Activated CD4-positive, alpha-beta T cell treated with anti-CD3 and anti-CD28 coated beads for 36 hours (primary cell): ENCODE measurements at regions of chr5 and their contacts with region 1.

Region 1: GRCh38 chr5:14720236-14720971 is 55.9 kb downstream of the OTULIN start:
- DNase-seq: peak; percentile 1
- ATAC-seq: no peak
- H3K4me3 Mint-ChIP-seq: no peak overlapping the region
- H3K27ac Mint-ChIP-seq: no peak overlapping the region
- H3K4me1 Mint-ChIP-seq: peaks cover 33% of the 10 kb centered on the region
- H3K27me3 Mint-ChIP-seq: no peaks in the 10 kb centered on the region

Region 2: DNA sequence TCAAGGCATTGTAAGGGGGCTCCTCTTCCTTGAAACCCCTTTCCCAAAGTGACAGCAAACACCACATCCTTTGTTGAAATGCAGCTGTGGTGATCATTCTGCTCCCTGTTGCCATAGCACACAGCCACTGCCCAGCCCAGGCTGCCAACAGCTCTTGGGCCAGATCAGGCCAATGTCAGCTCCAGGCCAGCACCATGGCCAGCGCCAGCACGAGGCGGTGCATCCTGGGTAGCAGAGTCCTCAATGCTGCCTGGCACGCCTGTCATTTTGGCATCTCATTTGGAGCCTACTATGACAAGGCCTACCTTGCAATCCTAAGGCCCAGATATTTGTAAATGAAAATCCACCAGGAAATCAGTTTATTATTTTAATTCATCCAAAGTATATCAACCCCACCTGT is 1166.5 kb before region 1 on chr5:
- CTCF ChIA-PET with region 1: no interaction called
- POLR2A ChIA-PET with region 1: no interaction called
- intact Hi-C with region 1: no loop called
- DNase-seq: peak; percentile 6
- ATAC-seq: no peak
- H3K4me3 Mint-ChIP-seq: no peak overlapping the region
- H3K27ac Mint-ChIP-seq: no peak overlapping the region
- H3K4me1 Mint-ChIP-seq: no peaks in the 10 kb centered on the region
- H3K27me3 Mint-ChIP-seq: no peaks in the 10 kb centered on the region

Region 3: GRCh38 chr5:14696057-14696456 is 24.3 kb before region 1 on chr5:
- CTCF ChIA-PET with region 1: no interaction called
- POLR2A ChIA-PET with region 1: no interaction called
- intact Hi-C with region 1: no loop called
- DNase-seq: no peak
- ATAC-seq: no peak
- H3K4me3 Mint-ChIP-seq: no peak overlapping the region
- H3K27ac Mint-ChIP-seq: peak overlapping the region; percentile 11
- H3K4me1 Mint-ChIP-seq: peaks cover 26% of the 10 kb centered on the region
- H3K27me3 Mint-ChIP-seq: no peaks in the 10 kb centered on the region

Region 4: DNA sequence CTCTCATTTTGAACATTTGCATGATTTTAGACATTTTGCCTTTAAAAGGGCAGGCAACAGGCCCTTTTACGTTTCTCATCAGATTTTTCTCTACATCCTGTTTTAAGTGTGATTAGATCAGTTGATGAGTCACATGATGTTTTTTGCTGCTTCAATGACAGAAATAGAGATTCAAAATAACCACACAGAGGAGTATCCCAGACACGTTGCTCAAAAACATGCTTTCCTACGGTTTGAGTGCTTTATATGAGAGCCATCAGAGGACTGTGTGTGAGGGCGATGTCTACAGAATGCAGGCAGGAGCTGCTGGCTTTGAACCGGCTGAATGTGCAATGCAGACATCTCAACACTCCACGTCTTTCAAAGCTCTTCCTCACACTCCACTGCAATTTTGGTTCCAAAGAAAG is 13.8 kb before region 1 on chr5:
- CTCF ChIA-PET with region 1: interaction called, 11 read pairs
- POLR2A ChIA-PET with region 1: no interaction called
- intact Hi-C with region 1: loop called in 1 of 2 experiments (anchors 1 kb)
- DNase-seq: peak; percentile 51
- ATAC-seq: peak; percentile 95
- H3K4me3 Mint-ChIP-seq: peak overlapping the region; percentile 48
- H3K27ac Mint-ChIP-seq: peak overlapping the region; percentile 98
- H3K4me1 Mint-ChIP-seq: peaks cover 83% of the 10 kb centered on the region
- H3K27me3 Mint-ChIP-seq: no peaks in the 10 kb centered on the region

Region 5: DNA sequence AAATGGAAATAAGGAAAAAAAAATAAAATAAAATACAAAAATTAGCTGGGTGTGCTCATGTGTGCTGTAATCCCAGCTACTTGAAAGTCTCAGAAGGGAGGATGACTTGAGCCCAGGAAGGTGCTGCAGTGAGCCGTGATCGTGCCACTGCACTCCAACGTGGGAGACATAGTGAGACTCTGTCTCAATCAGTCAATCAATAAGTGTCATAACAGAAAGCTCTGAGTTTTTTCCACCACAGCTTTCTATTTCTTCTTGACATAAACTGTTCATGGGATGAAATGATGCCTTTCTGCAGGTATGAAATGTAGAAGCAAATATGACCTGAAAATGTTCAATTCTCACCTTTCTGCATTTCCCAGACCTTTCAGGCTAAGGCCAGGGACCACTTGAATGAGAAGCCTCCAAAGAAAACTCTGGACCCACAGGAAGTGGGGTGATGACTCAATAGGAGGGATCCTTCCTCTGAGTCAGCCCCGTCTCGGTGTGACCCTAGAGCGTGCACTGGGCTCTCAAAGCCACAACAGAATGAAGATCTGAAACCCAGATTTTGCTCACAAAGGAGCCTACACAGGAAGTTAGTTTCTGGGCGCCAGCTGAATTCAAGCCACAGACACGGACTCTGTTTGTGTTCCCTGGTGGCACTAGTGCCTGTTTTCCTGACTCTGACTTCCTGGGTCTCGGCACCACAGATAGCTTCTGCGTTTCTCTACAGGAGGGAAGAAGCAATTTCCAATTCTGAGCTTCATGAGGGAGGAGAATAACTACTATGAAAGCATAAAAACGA is 89.2 kb after region 1 on chr5:
- CTCF ChIA-PET with region 1: interaction called, 4 read pairs
- POLR2A ChIA-PET with region 1: no interaction called
- intact Hi-C with region 1: loop called (anchors 1 to 5 kb)
- DNase-seq: peak; percentile 87
- ATAC-seq: peak; percentile 96
- H3K4me3 Mint-ChIP-seq: peak overlapping the region; percentile 55
- H3K27ac Mint-ChIP-seq: peak overlapping the region; percentile 71
- H3K4me1 Mint-ChIP-seq: peaks cover 51% of the 10 kb centered on the region
- H3K27me3 Mint-ChIP-seq: no peaks in the 10 kb centered on the region

Region 6: GRCh38 chr5:15645381-15646160 is 925.2 kb after region 1 on chr5:
- CTCF ChIA-PET with region 1: no interaction called
- POLR2A ChIA-PET with region 1: no interaction called
- intact Hi-C with region 1: no loop called
- DNase-seq: no peak
- ATAC-seq: no peak
- H3K4me3 Mint-ChIP-seq: no peak overlapping the region
- H3K27ac Mint-ChIP-seq: no peak overlapping the region
- H3K4me1 Mint-ChIP-seq: no peaks in the 10 kb centered on the region
- H3K27me3 Mint-ChIP-seq: peaks cover 4% of the 10 kb centered on the region